ENCODE measurements at regions of chr7 and their contacts with region 1.

Region 1: GRCh38 chr7:136030862-136031318 is 53.7 kb upstream of the MTPN start:
- DNase-seq: no peak
- H3K4me3 ChIP-seq: no peak overlapping the region
- H3K27ac ChIP-seq: peak overlapping the region in 3 of 4 donors; percentile 78 to 86 (median 84)
- H3K4me1 ChIP-seq: peaks cover 2 to 56% (median 35%) of the 10 kb centered on the region in 4 donors
- H3K27me3 ChIP-seq: no peaks in the 10 kb centered on the region
- CTCF ChIP-seq: no peak
- EP300 ChIP-seq: no peak
- POLR2A ChIP-seq: no peak

Region 2: DNA sequence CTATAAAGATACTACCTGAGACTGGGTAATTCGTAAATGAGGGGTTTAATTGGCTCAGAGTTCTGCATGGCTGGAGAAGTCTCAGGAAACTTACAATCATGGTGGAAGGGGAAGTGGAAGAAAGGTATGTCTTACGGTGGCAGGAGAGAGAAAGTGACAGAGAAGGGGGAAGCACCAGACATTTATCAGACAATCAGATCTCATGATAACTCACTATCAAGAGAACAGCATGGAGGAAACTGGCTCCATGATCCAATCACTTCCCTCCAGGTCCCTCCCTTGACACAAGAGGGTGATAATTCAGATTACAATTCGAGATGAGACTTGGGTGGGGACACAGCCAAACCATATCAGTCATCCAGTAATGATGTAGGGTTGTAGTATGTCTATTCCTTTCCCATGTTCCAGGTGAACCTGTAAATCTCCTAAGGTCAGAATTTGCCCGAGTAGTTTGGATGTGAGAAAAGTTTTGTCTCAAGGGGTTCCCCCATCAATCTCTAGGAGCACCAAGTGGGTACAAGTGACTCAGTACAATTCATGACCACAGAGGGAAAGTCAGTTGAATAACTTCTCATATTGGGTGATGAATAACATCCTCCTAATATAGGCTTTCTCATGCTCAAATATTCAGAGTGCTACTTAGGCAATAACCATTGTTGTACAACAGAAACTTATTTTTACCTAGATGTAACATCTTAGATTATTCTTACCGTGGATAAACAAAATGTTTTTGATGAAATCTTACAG is 14.1 kb before region 1 on chr7:
- intact Hi-C with region 1: no loop called
- DNase-seq: no peak
- H3K4me3 ChIP-seq: no peak overlapping the region
- H3K27ac ChIP-seq: no peak overlapping the region
- H3K4me1 ChIP-seq: peaks cover 0 to 9% (median 0%) of the 10 kb centered on the region in 4 donors
- H3K27me3 ChIP-seq: no peaks in the 10 kb centered on the region
- CTCF ChIP-seq: no peak
- EP300 ChIP-seq: no peak
- POLR2A ChIP-seq: no peak

Region 3: DNA sequence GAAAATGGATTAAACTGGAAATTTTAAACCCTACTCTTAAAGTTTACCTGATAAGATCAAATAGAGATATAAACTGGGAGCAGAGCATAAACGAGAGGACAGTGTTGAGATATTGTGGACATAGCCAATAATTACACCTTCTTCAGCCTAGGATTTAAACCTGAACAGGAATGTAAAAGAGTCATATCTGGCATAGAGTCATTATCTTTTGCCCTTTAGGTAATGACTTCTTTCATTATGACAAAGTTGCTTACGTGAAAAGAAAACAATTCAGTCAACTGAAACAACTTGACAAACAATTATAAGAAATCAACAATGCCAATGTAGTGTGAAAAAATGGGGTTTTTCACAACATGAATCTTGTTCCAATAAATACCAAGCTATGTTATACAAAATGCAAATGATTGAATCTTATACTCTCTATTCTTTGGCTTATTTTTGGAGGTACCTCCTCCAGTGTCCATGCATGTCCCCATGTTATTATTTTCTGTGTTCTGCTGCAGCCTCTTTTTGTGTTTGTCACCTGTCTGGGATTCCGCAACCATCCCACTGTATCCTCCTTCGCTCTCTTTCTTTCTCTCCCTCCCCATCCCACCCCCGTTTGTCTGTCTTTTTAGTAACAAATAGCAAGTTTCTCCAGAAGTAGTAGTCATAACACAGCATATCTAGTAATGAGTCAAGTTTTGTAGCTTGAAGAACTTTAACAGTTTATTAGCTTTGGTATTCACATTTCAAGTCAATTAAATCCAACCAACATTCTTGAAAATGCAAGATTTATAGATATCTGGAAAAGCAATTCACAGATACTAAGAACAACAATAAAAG is 100.1 kb after region 1 on chr7:
- intact Hi-C with region 1: loop called (anchors 1 kb)
- DNase-seq: no peak
- H3K4me3 ChIP-seq: no peak overlapping the region
- H3K27ac ChIP-seq: peak overlapping the region in 3 of 4 donors; percentile 24 to 32 (median 24)
- H3K4me1 ChIP-seq: peaks cover 0 to 10% (median 4%) of the 10 kb centered on the region in 4 donors
- H3K27me3 ChIP-seq: no peaks in the 10 kb centered on the region
- CTCF ChIP-seq: no peak
- EP300 ChIP-seq: no peak
- POLR2A ChIP-seq: no peak

Region 4: GRCh38 chr7:136266457-136266856 is 235.6 kb after region 1 on chr7:
- intact Hi-C with region 1: loop called (anchors 1 kb)
- DNase-seq: peak; percentile 88
- H3K4me3 ChIP-seq: no peak overlapping the region
- H3K27ac ChIP-seq: peak overlapping the region in 3 of 4 donors; percentile 30 to 64 (median 54)
- H3K4me1 ChIP-seq: peaks cover 0 to 11% (median 2%) of the 10 kb centered on the region in 4 donors
- H3K27me3 ChIP-seq: no peaks in the 10 kb centered on the region
- CTCF ChIP-seq: no peak
- EP300 ChIP-seq: peak in 2 of 4 donors; percentile 9 to 64
- POLR2A ChIP-seq: no peak

Region 5: DNA sequence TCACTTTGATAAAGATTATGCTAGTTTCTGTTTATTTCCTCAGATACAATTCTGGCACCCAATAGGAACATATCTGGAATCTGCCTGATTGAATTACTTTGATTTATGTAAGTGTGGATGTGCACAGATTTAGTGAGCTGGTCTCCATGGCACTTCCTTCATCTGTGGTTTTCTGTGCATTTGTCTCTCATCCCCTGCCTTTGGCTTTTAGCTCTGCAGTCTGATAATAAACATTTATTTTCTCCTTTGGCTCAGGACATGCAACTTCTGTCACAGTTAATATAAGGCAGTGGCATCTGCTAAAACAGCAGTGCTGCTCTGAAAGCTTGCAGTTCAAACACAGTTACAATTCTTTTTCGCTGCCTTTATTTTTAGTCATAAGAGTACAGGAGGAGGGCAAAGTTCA is 563.9 kb after region 1 on chr7:
- intact Hi-C with region 1: loop called (anchors 5 kb)
- DNase-seq: no peak
- H3K4me3 ChIP-seq: no peak overlapping the region
- H3K27ac ChIP-seq: peak overlapping the region in 3 of 4 donors; percentile 60 to 76 (median 73)
- H3K4me1 ChIP-seq: peaks cover 0 to 48% (median 10%) of the 10 kb centered on the region in 4 donors
- H3K27me3 ChIP-seq: no peaks in the 10 kb centered on the region
- CTCF ChIP-seq: peak in 2 of 4 experiments; percentile 9 to 18
- EP300 ChIP-seq: peak in 3 of 4 donors; percentile 58 to 72 (median 61)
- POLR2A ChIP-seq: no peak

Region 6: DNA sequence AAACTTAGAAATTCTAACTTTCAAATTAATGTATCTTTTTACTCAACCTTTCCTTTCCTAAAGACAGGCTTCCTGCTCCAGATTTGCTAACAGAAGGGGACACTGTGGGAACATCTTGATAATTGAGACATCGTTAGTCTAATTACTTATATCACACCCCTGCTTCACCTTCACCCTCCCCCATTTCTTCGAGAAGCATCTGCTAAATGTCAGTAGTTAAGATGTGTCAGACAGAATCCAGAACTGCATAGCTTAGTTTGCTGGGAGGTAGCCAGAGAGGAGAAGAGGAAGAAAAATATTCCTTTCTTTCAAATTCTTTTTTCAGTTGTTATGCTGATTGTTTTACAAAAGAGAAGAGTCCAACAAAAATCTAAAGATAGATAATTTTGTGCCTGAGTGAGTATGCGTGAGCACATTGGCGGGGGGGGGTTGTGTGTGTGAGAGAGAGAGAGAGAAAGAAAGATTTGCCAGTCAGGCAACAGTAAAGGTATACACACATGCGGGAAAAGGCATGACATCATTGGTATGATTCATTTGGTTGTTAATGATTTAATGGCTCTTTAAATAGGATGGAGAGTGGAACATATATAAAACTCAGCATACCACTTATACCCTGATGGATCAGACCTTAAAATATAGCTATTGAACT is 1120.3 kb after region 1 on chr7:
- intact Hi-C with region 1: loop called (anchors 5 kb)
- DNase-seq: no peak
- H3K4me3 ChIP-seq: no peak overlapping the region
- H3K27ac ChIP-seq: peak overlapping the region; percentile 61 to 85 (median 78)
- H3K4me1 ChIP-seq: peaks cover 0 to 65% (median 37%) of the 10 kb centered on the region in 4 donors
- H3K27me3 ChIP-seq: no peaks in the 10 kb centered on the region
- CTCF ChIP-seq: no peak
- EP300 ChIP-seq: peak; percentile 6 to 93 (median 84)
- POLR2A ChIP-seq: no peak

Region 7: DNA sequence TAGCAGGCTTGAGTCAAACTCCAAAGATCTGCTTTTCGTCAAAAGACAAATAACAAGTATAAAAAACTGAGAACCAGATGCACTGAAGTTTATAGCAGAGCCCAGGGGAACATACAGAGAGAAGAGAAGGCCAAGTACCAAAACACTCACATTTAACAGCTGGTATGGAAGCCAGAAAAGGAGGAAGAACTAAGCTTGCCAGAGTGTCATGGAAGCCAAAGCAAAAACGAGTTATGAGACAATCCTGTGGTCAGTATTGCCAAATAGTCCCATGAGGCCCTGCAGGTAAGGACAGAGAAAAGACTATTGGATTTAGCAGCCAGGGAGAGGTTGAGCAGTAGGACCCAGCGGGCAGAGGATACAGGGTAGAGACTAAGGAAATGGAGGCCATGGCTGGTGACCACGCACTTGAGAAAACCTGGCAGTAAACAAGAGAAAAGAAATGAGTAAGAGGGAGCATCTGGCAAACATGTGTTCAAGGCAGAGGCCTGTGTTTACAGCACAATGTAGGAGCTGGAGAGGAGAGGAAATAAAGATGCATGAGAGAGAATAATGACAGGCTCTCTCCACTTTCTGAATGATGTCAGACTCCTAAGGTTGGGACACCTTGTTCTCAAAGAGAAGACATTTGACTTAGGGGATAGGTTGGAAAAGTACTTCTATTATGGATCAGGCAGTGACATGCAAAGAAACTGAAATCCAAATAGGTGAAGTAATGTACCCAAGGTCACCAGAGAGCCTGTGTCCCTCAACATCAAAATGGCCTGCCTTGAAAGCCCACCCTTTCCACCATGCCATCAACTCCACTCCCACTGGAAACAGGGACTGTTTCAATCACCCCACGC is 1961.9 kb after region 1 on chr7:
- intact Hi-C with region 1: loop called (anchors 10 kb)
- DNase-seq: peak; percentile 97
- H3K4me3 ChIP-seq: peak overlapping the region in 2 of 4 donors; percentile 14 to 18
- H3K27ac ChIP-seq: peak overlapping the region; percentile 68 to 99 (median 86)
- H3K4me1 ChIP-seq: peaks cover 0 to 98% (median 97%) of the 10 kb centered on the region in 4 donors
- H3K27me3 ChIP-seq: no peaks in the 10 kb centered on the region
- CTCF ChIP-seq: no peak
- EP300 ChIP-seq: peak; percentile 48 to 81 (median 68)
- POLR2A ChIP-seq: no peak